ENCODE measurements at regions of chr1 and their contacts with region 1.

Region 1: DNA sequence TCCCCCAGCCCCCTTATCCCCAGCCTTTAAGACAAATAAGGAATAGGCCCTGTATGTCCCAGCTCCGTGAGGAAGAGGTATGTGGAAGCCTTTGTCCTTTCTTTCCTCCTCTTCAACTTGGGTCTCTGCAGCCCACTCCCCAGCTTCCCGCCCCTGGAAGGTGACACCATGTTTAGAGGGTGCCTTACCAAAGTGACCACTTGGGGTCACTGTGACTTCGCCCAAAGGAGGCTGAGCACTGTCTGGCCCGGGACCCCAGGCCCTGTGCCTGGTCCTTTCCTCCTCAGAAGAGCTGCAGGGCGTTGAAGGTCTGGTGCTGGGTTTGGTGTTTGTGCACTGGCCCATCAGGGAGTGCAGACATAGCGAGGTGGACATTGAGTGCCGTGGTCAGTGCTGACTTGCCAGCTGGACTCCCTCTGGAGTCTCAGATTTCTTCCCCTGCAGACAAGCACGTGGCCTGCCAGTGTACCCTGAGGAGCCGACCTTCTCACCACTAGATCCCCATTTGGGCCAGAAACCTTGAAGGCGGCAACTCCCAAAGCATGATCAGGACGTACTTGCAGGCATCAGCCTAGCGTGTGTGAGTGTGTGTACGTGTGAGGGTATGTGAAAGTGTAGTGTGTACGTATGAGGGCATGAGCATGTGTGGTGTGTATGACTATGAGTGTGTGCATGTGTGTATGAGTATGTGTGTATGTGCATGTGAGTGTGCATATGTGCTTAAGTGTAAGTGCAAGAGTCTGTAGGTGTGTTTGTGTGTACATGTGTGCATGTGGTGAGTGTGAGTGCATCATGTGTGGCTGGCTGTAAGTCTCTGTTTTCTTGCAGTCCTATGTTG is 181.4 kb upstream of the KIAA0040 start:
- H3K4me3 Mint-ChIP-seq: no peak overlapping the region
- H3K27ac Mint-ChIP-seq: no peak overlapping the region
- H3K4me1 Mint-ChIP-seq: no peaks in the 10 kb centered on the region
- H3K27me3 Mint-ChIP-seq: peaks cover 1% of the 10 kb centered on the region

Region 2: DNA sequence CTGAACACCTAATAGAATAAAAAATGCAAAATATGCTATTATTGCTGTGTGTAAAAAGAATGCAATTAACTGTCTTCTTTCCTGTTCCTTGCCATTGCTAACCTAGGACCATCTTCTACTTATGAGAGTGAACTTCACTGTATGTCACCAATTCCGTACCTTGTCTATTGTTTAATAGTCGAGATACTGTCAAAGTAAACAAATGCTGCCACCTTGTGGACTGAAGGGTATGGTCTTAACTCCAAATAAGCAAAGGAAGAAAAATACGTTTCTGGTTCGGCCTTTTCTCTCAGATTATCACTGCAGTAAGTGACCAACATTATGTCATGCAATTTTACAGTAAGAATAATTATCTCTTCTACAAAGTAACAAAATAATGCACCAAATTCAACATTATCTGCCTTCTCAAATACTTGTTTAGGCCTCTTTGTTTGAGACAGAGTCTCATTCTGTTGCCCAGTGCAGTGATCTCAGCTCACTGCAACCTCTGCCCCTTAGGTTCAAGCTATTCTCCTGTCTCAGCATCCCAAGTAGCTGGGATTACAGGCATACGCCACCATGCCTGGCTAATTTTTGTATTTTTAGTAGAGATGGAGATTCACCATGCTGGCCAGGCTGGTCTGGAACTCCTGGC is 699.6 kb after region 1 on chr1:
- intact Hi-C with region 1: loop called (anchors 10 kb)
- H3K4me3 Mint-ChIP-seq: no peak overlapping the region
- H3K27ac Mint-ChIP-seq: no peak overlapping the region
- H3K4me1 Mint-ChIP-seq: no peaks in the 10 kb centered on the region
- H3K27me3 Mint-ChIP-seq: no peaks in the 10 kb centered on the region